Transverse colon (tissue), 4 donors: ENCODE measurements at regions of chr7 and their contacts with region 1.

Region 1: GRCh38 chr7:96701258-96701657 is 8.4 kb downstream of the SEM1 start:
- DNase-seq: no peak
- H3K4me3 ChIP-seq: no peak overlapping the region
- H3K27ac ChIP-seq: no peak overlapping the region
- H3K4me1 ChIP-seq: peaks cover 0 to 13% (median 3%) of the 10 kb centered on the region in 4 donors
- H3K27me3 ChIP-seq: no peaks in the 10 kb centered on the region
- CTCF ChIP-seq: no peak
- EP300 ChIP-seq: no peak
- POLR2A ChIP-seq: no peak

Region 2: GRCh38 chr7:95104739-95105138 is 1596.5 kb before region 1 on chr7:
- in situ Hi-C with region 1: no loop called
- intact Hi-C with region 1: loop called (anchors 5 kb)
- DNase-seq: no peak
- H3K4me3 ChIP-seq: no peak overlapping the region
- H3K27ac ChIP-seq: peak overlapping the region in 3 of 4 donors; percentile 36 to 64 (median 45)
- H3K4me1 ChIP-seq: peaks cover 0 to 4% (median 2%) of the 10 kb centered on the region in 4 donors
- H3K27me3 ChIP-seq: no peaks in the 10 kb centered on the region
- CTCF ChIP-seq: no peak
- EP300 ChIP-seq: no peak
- POLR2A ChIP-seq: no peak

Region 3: GRCh38 chr7:97342512-97342911 is 641.3 kb after region 1 on chr7:
- in situ Hi-C with region 1: no loop called
- intact Hi-C with region 1: no loop called
- DNase-seq: peak; percentile 28
- H3K4me3 ChIP-seq: no peak overlapping the region
- H3K27ac ChIP-seq: no peak overlapping the region
- H3K4me1 ChIP-seq: peaks cover 0 to 8% (median 0%) of the 10 kb centered on the region in 4 donors
- H3K27me3 ChIP-seq: no peaks in the 10 kb centered on the region
- CTCF ChIP-seq: no peak
- EP300 ChIP-seq: no peak
- POLR2A ChIP-seq: no peak